HEK293 (cell line): ENCODE measurements at regions of chr10 and their contacts with region 1.

Region 1: DNA sequence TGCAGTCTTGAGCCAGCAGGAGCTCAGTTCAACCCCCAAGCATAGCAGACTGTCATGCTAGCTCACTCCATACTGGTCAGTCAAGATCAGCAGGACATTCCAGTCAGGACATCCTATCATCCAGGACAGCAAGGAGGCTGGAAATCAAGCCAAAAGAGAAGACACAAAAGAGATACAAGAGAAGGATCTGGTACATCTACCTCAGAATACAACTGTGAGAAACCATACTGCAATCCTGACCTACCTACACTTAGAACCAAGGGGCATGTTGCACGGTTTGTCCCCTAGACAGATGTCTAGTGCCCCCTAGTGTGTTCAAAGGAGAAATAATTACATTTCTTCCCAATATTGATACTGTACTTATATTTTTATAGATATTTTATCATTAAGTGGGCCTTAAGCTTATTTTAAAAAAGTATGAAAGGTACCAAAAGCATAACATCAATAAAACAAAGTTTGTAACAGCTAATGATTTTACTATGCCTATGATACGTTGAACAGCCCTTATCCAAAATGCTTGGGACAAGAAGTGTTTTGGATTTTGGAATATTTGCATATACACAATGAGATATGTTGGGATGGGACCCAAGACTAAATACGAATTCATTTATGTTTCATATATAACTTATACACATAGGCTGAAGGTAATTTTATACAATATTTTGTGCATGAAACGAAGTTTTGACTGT is 26.7 kb downstream of the ERCC6 start:
- H3K4me3 ChIP-seq: no peak overlapping the region
- H3K27ac ChIP-seq: no peak overlapping the region
- H3K4me1 ChIP-seq: no peaks in the 10 kb centered on the region
- CTCF ChIP-seq: 0 out of 2 replicates have a peak, but pooled peaks have one; percentile 9

Region 2: DNA sequence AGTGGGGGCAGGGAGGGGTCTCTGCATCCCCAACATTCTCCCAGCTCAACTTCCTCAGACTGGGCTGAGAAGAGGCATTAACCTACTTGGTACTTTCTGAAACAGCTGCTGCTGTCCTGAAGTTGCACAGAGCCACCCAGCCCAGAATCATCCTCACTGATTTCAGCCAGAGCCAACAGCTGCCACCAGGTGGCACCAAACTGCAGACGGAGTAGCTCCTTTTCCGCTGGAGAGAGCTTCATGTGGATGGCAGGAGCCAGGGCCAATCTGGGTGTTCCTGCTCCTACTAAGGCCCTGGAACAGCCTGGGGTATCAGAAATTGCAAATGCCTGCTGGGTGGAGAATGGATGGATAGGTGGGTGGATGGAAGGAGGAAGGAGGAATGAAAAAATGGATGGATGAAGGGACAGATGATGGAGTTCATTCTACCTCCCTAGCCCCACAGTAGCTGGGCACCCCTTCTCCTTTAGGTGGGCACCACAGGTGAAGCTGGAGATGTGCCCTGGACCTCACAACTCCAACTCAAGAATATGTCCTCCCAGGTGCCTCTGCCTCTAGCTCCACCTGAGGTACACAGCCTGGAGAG is 104.6 kb before region 1 on chr10:
- CTCF ChIA-PET with region 1: interaction called, 87 read pairs
- POLR2A ChIA-PET with region 1: no interaction called
- H3K4me3 ChIP-seq: no peak overlapping the region
- H3K27ac ChIP-seq: no peak overlapping the region
- H3K4me1 ChIP-seq: no peaks in the 10 kb centered on the region
- CTCF ChIP-seq: peak; percentile 84

Region 3: DNA sequence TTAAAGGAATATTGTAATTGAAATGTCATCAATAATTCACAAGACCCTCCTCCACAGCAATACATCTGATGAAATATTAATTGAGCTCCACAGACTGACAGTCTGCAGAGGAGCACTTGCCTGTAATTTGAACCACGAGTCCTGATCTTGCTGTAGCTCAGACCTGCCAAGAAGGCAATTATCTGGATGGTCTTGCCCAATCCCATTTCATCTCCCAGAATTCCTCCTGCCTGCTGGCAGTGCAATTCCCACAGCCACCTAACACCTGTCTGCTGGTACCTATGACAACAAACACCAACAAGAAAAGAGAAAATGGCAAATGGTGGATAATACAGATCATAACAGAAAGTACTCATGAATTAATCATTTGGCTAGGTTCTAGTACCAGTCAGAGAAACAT is 11.8 kb before region 1 on chr10:
- CTCF ChIA-PET with region 1: interaction called, 25 read pairs
- POLR2A ChIA-PET with region 1: no interaction called
- H3K4me3 ChIP-seq: no peak overlapping the region
- H3K27ac ChIP-seq: no peak overlapping the region
- H3K4me1 ChIP-seq: peaks cover 8% of the 10 kb centered on the region; the same call in 1 of the 2 replicates
- CTCF ChIP-seq: no peak

Region 4: GRCh38 chr10:49524496-49524895 is 12.2 kb after region 1 on chr10:
- CTCF ChIA-PET with region 1: interaction called, 29 read pairs
- POLR2A ChIA-PET with region 1: no interaction called
- H3K4me3 ChIP-seq: no peak overlapping the region
- H3K27ac ChIP-seq: no peak overlapping the region
- H3K4me1 ChIP-seq: no peaks in the 10 kb centered on the region
- CTCF ChIP-seq: no peak